WTC11 (cell line): ENCODE measurements at regions of chr11 and their contacts with region 1.

Region 1: GRCh38 chr11:116732271-116733042 is 40.3 kb downstream of the BUD13 start:
- DNase-seq: peak; percentile 85
- ATAC-seq: peak; percentile 88
- H3K4me3 Mint-ChIP-seq: peak overlapping the region; percentile 64
- H3K27ac Mint-ChIP-seq: peak overlapping the region; percentile 50; the same call in 1 of the 2 replicates
- H3K4me1 Mint-ChIP-seq: peaks cover 36% of the 10 kb centered on the region
- H3K27me3 Mint-ChIP-seq: no peaks in the 10 kb centered on the region
- CTCF ChIP-seq: peak; percentile 85

Region 2: DNA sequence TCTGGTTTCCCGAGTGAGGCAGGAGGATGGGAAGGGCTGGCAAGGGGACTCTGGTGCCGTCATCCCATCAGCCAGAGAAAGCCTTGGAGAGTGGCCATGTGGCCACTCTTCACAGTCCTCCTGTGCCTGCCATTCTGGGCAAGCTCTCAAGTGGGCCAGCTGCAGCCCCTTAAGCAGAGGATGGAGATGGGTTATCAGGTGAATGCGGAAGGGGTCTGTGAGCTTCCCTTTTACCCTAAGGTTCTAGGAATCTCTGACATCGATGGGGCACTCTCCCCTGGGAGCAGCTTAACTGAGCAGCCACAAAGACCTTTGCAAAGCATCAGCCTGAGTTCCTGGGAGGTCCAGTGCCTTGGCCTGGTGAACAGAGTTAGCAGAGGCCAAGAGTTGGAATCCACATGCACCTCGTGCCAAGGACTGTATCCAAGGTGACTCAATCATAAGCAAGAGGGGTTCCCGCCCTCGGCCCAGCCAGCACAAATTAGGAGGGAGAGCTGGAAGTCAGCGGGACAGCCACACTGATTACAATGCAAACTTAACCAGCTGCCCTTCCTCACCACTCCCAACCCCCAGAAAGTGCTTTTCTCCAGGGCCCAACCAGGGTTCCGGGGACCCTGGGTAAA is 153.3 kb before region 1 on chr11:
- CTCF ChIA-PET with region 1: interaction called, 11 read pairs
- POLR2A ChIA-PET with region 1: no interaction called
- DNase-seq: peak; percentile 41
- ATAC-seq: peak; percentile 12
- H3K4me3 Mint-ChIP-seq: peak overlapping the region; percentile 64
- H3K27ac Mint-ChIP-seq: no peak overlapping the region
- H3K4me1 Mint-ChIP-seq: peaks cover 32% of the 10 kb centered on the region
- H3K27me3 Mint-ChIP-seq: peaks cover 78% of the 10 kb centered on the region
- CTCF ChIP-seq: no peak

Region 3: GRCh38 chr11:116703421-116703820 is 29.0 kb before region 1 on chr11:
- CTCF ChIA-PET with region 1: interaction called, 40 read pairs
- POLR2A ChIA-PET with region 1: no interaction called
- DNase-seq: peak; percentile 60
- ATAC-seq: peak; percentile 80
- H3K4me3 Mint-ChIP-seq: no peak overlapping the region
- H3K27ac Mint-ChIP-seq: no peak overlapping the region
- H3K4me1 Mint-ChIP-seq: peaks cover 14% of the 10 kb centered on the region
- H3K27me3 Mint-ChIP-seq: peaks cover 8% of the 10 kb centered on the region; the same call in 1 of the 2 replicates
- CTCF ChIP-seq: no peak

Region 4: GRCh38 chr11:116721988-116722387 is 10.5 kb before region 1 on chr11:
- CTCF ChIA-PET with region 1: interaction called, 55 read pairs
- POLR2A ChIA-PET with region 1: no interaction called
- DNase-seq: no peak
- ATAC-seq: no peak
- H3K4me3 Mint-ChIP-seq: no peak overlapping the region
- H3K27ac Mint-ChIP-seq: no peak overlapping the region
- H3K4me1 Mint-ChIP-seq: peaks cover 6% of the 10 kb centered on the region
- H3K27me3 Mint-ChIP-seq: peaks cover 5% of the 10 kb centered on the region
- CTCF ChIP-seq: no peak

Region 5: DNA sequence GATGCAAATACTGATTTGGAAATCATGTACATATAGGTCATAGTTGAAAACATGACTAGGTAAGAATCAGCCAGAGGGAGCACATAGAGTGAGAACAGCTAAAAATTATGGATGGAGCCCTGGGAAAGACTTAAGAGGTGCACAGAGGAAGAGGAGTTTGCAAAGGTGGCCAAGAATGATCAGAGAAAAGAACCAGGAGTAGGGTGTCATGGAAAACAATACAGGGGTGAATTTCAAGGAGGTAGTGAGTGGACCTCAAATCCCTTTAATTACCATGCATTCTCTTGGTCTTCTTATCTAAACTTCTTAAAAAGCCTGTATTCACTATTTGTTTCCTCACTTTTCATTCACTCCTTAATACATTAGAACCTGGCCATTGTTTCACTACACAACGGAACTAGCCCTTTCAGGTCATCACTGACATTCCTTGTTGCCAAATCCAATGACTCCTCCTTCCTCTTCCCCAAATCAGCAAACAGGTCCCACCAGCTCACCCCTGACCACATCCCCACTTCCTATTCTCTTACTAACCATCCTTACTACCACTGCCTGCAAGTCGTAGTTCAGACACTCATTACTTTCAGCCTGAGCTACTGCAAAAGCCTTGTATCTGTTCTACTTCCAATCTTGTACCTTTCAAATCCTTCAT is 17.7 kb after region 1 on chr11:
- CTCF ChIA-PET with region 1: no interaction called
- POLR2A ChIA-PET with region 1: no interaction called
- DNase-seq: no peak
- ATAC-seq: no peak
- H3K4me3 Mint-ChIP-seq: no peak overlapping the region
- H3K27ac Mint-ChIP-seq: no peak overlapping the region
- H3K4me1 Mint-ChIP-seq: no peaks in the 10 kb centered on the region
- H3K27me3 Mint-ChIP-seq: no peaks in the 10 kb centered on the region
- CTCF ChIP-seq: no peak

Region 6: GRCh38 chr11:116938471-116939070 is 206.1 kb after region 1 on chr11:
- CTCF ChIA-PET with region 1: no interaction called
- POLR2A ChIA-PET with region 1: no interaction called
- DNase-seq: no peak
- ATAC-seq: no peak
- H3K4me3 Mint-ChIP-seq: no peak overlapping the region
- H3K27ac Mint-ChIP-seq: no peak overlapping the region
- H3K4me1 Mint-ChIP-seq: no peaks in the 10 kb centered on the region
- H3K27me3 Mint-ChIP-seq: no peaks in the 10 kb centered on the region
- CTCF ChIP-seq: no peak